Activated CD8-positive, alpha-beta T cell treated with anti-CD3 and anti-CD28 coated beads, Interleukin-2, amount 10 ng/mL, durations not matched to agents 7 days and 5 days (primary cell): ENCODE measurements at regions of chr2 and their contacts with region 1.

Region 1: DNA sequence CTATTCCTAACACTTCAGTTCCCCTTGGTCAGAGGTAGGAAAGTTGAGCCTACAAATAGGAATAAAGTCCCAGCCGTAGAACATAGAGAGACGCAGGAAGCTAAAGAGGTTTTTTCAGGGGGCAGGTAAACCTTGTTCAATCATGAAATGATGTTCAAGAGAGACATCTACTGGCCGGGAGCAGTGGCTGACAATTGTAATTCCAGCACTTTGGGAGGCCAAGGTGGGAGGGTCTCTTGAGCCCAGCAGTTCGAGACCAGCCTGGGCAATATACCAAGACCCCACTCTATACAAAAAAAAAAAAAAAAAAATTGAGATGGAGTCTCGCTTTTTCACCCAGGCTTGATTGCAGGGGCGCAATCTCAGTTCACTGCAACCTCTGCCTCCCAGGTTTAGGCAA is 66.7 kb upstream of the DNAJC10 start:
- DNase-seq: no peak
- ATAC-seq: no peak
- H3K4me3 Mint-ChIP-seq: no peak overlapping the region
- H3K27ac Mint-ChIP-seq: no peak overlapping the region
- H3K4me1 Mint-ChIP-seq: peaks cover 2% of the 10 kb centered on the region
- H3K27me3 Mint-ChIP-seq: no peaks in the 10 kb centered on the region

Region 2: DNA sequence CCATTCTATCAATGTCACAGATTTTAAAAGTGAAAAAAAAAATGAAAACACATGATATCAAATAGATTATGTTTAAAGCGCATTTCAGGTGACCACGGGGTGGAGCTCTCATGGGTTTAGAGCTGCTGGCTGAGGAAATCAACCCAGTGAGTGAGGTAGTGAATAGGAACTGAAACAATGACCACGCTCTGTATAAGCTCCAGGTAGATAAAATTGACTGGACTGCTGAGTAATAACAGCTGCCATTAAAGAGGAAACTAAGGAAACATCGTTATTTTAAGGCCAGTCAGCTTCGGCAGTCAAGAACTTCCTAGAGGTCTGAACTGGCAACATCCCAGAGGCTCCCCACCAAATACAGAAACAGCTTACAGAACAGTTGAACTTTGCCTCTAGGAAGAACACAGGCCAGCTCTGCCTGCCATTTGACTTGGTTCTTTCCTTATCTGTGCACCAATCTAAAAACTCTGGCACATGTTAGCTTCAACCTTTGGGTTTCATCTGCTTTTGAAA is 408.4 kb before region 1 on chr2:
- CTCF ChIA-PET with region 1: interaction called, 19 read pairs
- POLR2A ChIA-PET with region 1: no interaction called
- DNase-seq: peak; percentile 37
- ATAC-seq: peak; percentile 51
- H3K4me3 Mint-ChIP-seq: no peak overlapping the region
- H3K27ac Mint-ChIP-seq: no peak overlapping the region
- H3K4me1 Mint-ChIP-seq: no peaks in the 10 kb centered on the region
- H3K27me3 Mint-ChIP-seq: no peaks in the 10 kb centered on the region

Region 3: DNA sequence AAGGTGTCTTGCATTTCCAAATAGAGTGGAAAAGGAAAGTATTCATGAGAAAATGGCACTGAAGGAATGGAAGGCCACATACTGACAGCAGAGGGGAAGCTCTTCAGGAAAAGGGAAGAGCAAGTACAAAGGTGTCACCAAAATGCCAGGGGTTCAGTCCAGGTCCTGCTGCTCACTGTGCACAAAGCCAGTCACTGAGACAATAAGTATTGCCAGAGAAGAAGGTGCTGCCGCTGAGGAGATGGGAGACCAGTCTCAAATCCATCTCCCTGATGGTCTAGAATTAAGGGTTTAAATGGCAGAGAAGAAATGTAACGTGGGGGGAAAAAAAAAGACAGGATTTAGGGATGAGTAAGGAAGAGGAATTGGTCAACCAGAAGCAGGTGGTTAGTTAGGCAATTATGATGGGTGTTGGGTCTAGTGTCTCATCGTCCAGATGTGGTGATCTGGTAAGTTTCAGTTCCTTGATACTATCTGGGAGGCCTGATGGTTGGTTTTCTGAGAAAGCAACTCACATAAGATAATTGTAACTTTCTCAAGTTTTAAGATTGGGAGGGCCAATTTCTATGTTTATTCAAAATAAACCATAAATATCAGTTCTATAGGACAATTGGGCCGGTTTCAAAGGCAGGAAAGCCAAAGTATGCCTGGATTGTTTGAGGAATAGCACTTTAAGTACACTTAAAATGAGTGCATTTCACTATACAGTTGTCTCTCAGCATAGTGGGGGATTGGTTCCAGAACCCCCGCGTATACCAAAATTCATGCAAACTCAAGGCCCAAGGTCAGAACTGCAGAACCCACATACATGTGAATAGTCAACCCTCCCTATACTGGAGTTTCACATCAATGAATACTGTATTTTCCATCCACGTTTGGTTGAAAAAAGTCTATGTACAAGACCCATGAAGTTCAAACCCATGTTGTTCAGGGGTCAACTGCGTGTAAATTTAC is 42.3 kb before region 1 on chr2:
- CTCF ChIA-PET with region 1: no interaction called
- POLR2A ChIA-PET with region 1: no interaction called
- DNase-seq: no peak
- ATAC-seq: no peak
- H3K4me3 Mint-ChIP-seq: no peak overlapping the region
- H3K27ac Mint-ChIP-seq: no peak overlapping the region
- H3K4me1 Mint-ChIP-seq: no peaks in the 10 kb centered on the region
- H3K27me3 Mint-ChIP-seq: peaks cover 2% of the 10 kb centered on the region